Common myeloid progenitor, CD34-positive (primary cell): ENCODE measurements at regions of chr20 and their contacts with region 1.

Region 1: GRCh38 chr20:43942661-43943290 is 28.1 kb downstream of the TOX2 start:
- DNase-seq: peak; percentile 86 to 96 (median 95)
- H3K4me3 ChIP-seq: peak overlapping the region in 4 of 7 experiments; percentile 12 to 29 (median 13)
- H3K27ac ChIP-seq: peak overlapping the region in 1 of 2 experiments; percentile 71
- H3K4me1 ChIP-seq: peaks cover 8 to 31% (median 26%) of the 10 kb centered on the region in 4 experiments
- H3K27me3 ChIP-seq: peaks cover 0 to 28% (median 16%) of the 10 kb centered on the region in 5 experiments

Region 2: GRCh38 chr20:43691928-43692524 is 250.8 kb before region 1 on chr20:
- CTCF ChIA-PET with region 1: no interaction called
- POLR2A ChIA-PET with region 1: no interaction called
- DNase-seq: peak; percentile 42 to 54 (median 50)
- H3K4me3 ChIP-seq: no peak overlapping the region
- H3K27ac ChIP-seq: no peak overlapping the region
- H3K4me1 ChIP-seq: no peaks in the 10 kb centered on the region
- H3K27me3 ChIP-seq: no peaks in the 10 kb centered on the region

Region 3: DNA sequence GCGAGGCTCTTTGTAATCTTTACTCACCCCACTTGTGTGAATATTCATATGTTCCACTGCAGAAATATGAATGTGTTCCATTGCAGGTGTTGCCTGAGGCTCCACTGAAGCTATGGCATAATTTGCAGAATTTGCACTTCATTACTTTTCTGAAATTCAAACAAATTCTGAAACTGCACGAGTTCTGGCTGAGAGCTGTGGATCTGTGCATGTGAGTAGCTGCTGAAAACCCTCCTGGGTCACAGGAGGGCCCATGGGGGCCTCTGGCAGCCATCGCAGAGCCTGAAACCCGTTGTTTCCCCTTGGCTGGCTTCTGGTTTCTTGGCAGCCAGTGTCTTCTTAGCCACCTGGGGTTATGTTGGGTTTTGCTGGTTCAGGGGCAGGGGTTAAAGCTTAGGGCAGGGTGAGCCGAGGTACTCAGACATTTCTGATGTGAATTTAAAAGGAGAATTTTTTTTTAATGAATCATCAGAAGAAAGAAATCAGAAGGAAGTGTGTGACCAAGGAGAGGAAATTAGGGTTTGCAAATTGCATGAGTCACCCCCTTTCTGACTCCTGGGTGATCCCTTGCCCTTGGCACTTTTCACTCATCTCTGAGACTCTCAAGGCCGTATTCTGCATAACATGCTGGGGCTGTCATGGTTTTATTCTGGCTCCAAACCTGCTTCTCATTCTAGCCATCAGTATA is 12.4 kb after region 1 on chr20:
- CTCF ChIA-PET with region 1: interaction called, 19 read pairs
- POLR2A ChIA-PET with region 1: no interaction called
- DNase-seq: peak; percentile 84 to 96 (median 93)
- H3K4me3 ChIP-seq: peak overlapping the region in 3 of 7 experiments; percentile 15 to 55 (median 52)
- H3K27ac ChIP-seq: no peak overlapping the region
- H3K4me1 ChIP-seq: peaks cover 11 to 60% (median 40%) of the 10 kb centered on the region in 4 experiments
- H3K27me3 ChIP-seq: peaks cover 0 to 60% (median 28%) of the 10 kb centered on the region in 5 experiments

Region 4: GRCh38 chr20:43983359-43983758 is 40.6 kb after region 1 on chr20:
- CTCF ChIA-PET with region 1: no interaction called
- POLR2A ChIA-PET with region 1: no interaction called
- DNase-seq: no peak
- H3K4me3 ChIP-seq: no peak overlapping the region
- H3K27ac ChIP-seq: no peak overlapping the region
- H3K4me1 ChIP-seq: no peaks in the 10 kb centered on the region
- H3K27me3 ChIP-seq: peaks cover 0 to 10% (median 3%) of the 10 kb centered on the region in 5 experiments

Region 5: GRCh38 chr20:44217342-44218092 is 274.7 kb after region 1 on chr20:
- CTCF ChIA-PET with region 1: no interaction called
- POLR2A ChIA-PET with region 1: no interaction called
- DNase-seq: peak; percentile 79 to 91 (median 86)
- H3K4me3 ChIP-seq: peak overlapping the region in 6 of 7 experiments; percentile 27 to 65 (median 40)
- H3K27ac ChIP-seq: no peak overlapping the region
- H3K4me1 ChIP-seq: peaks cover 18 to 32% (median 29%) of the 10 kb centered on the region in 4 experiments
- H3K27me3 ChIP-seq: no peaks in the 10 kb centered on the region